Spleen (tissue), 13 donors: ENCODE measurements at regions of chr1 and their contacts with region 1.

Region 1: GRCh38 chr1:205528887-205529825 is 24.7 kb downstream of the CDK18 start:
- DNase-seq: peak; percentile 95
- H3K4me3 ChIP-seq: peak overlapping the region in 6 of 8 donors; percentile 26 to 66 (median 33)
- H3K27ac ChIP-seq: no peak overlapping the region
- H3K4me1 ChIP-seq: peaks cover 0 to 17% (median 11%) of the 10 kb centered on the region in 6 donors
- H3K27me3 ChIP-seq: no peaks in the 10 kb centered on the region
- CTCF ChIP-seq: peak; percentile 79 to 93 (median 89)
- POLR2A ChIP-seq: no peak

Region 2: DNA sequence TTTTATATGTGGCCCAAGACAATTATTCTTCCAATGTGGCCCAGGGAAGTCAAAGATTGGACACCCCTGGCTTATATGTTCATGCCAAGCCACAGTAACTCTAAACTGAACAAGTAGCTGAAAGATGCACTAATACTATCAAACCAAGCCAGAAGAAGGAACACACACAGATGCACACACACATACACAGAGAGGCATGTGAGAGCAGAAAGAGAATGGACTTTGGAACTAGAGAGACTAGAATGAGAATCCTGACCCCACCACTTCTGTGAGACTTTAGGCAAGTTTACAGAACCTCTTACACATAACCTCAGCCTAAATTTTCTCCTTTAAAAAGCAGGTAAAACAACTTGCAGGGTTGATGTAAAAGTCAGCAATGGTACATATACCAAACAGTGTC is 433.7 kb before region 1 on chr1:
- intact Hi-C with region 1: no loop called
- DNase-seq: no peak
- H3K4me3 ChIP-seq: no peak overlapping the region
- H3K27ac ChIP-seq: no peak overlapping the region
- H3K4me1 ChIP-seq: no peaks in the 10 kb centered on the region
- H3K27me3 ChIP-seq: no peaks in the 10 kb centered on the region
- CTCF ChIP-seq: no peak
- POLR2A ChIP-seq: no peak

Region 3: DNA sequence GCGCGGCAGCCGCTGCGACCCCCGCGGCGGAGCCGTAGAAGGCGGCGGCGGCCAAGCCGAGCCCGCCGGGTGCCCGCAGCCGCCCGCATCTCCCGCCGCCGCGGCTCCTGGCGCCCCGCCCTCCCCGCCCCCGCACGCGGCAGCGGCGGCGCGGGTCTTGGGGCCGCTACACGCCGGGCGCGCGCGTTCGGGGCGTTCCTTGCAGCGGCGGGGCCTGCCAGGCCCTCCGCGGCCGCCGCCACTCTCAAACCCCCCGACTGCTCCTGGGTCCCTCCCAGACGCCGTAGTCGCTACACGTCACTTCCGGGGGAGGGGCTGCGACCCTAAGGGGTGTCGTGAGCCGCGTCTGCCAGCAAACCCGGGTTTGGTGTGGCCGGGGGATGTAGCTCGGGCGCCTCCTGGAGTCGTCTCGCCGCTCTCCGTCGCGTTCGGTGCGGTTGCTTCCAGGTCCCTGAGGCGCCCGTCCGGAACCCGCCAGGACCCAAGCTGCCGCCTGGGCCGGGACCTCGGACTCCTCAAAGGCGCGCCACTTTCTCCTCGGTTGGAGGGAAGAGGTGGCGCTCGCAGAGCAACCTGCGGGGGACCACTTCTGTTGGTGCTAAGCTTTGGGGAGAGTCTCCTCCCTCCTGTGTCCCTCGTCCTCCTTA is 102.7 kb after region 1 on chr1 and contains the start of gene ELK4:
- intact Hi-C with region 1: loop called (anchors 5 kb)
- DNase-seq: peak; percentile 100
- H3K4me3 ChIP-seq: peak within 1 kb of the TSS; percentile 48 to 81 (median 64)
- H3K27ac ChIP-seq: peak within 1 kb of the TSS; percentile 94 to 99 (median 96)
- H3K4me1 ChIP-seq: peaks cover 30 to 55% (median 47%) of the 10 kb centered on the region in 6 donors
- H3K27me3 ChIP-seq: no peaks in the 10 kb centered on the region
- CTCF ChIP-seq: peak; percentile 63 to 89 (median 78)
- POLR2A ChIP-seq: peak; percentile 60 to 90 (median 85)
- total RNA-seq, gene ELK4: 50.9 to 109 (median 102) TPM

Region 4: GRCh38 chr1:205658943-205659581 is 129.9 kb after region 1 on chr1:
- intact Hi-C with region 1: loop called (anchors 2 kb)
- DNase-seq: peak; percentile 93
- H3K4me3 ChIP-seq: no peak overlapping the region
- H3K27ac ChIP-seq: peak overlapping the region in 3 of 8 donors; percentile 26 to 56 (median 43)
- H3K4me1 ChIP-seq: peaks cover 7 to 66% (median 35%) of the 10 kb centered on the region in 6 donors
- H3K27me3 ChIP-seq: no peaks in the 10 kb centered on the region
- CTCF ChIP-seq: peak; percentile 75 to 93 (median 90)
- POLR2A ChIP-seq: no peak